H1 (cell line): ENCODE measurements at regions of chr22 and their contacts with region 1.

Region 1: DNA sequence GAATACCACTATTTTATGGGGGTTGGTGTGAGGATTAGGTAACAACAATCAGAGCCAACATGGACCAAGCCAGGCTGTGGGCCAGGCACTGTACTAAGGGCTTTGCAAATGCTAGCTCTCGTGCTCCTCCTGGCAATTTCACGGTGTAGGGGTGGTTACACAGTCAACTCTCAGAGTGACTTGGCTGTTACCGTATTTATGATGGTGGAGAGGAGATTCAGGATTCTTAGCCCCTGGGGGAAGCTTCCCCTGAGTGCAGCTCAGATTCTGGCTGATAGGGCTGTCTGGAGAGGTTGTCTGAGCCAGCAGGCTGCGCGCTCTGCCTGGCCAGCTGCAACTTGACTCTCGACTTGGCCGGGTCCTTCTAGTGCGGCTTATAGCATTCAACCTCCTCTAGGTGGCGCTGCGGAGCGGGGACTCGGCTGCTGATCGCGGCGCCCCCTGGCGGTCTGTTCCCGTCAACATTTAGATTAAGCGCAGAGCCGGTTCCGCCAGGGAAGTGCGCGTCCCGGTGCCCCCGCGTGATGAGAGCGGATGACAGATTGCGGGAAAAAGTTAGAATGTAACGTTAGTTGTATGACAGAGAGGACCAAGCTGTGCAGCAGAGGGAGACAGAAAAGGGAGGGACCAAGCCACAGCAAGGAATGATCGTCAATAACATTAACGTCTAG is 4.5 kb upstream of the NCF4 start:
- DNase-seq: peak; percentile 78 to 99
- H3K4me3 ChIP-seq: no peak overlapping the region
- H3K27ac ChIP-seq: no peak overlapping the region
- H3K4me1 ChIP-seq: peaks cover 0 to 3% (median under 1%) of the 10 kb centered on the region in 4 experiments; a peak in 2 of 7 replicates
- H3K27me3 ChIP-seq: peaks cover 1 to 16% (median 10%) of the 10 kb centered on the region in 4 experiments
- CTCF ChIP-seq: peak; percentile 97 to 100 (median 100)
- EP300 ChIP-seq: no peak
- POLR2A ChIP-seq: no peak
- RAD21 ChIP-seq: peak; percentile 81 to 91

Region 2: GRCh38 chr22:36757668-36758211 is 98.5 kb before region 1 on chr22:
- CTCF ChIA-PET with region 1: interaction called, 30 read pairs
- POLR2A ChIA-PET with region 1: no interaction called
- DNase-seq: peak; percentile 63 to 92
- H3K4me3 ChIP-seq: no peak overlapping the region
- H3K27ac ChIP-seq: no peak overlapping the region
- H3K4me1 ChIP-seq: peaks cover 0 to 7% (median 0%) of the 10 kb centered on the region in 4 experiments; a peak in 2 of 7 replicates
- H3K27me3 ChIP-seq: peaks cover 0 to 3% (median 0%) of the 10 kb centered on the region in 4 experiments; a peak in 2 of 7 replicates
- CTCF ChIP-seq: peak; percentile 90 to 95 (median 95)
- EP300 ChIP-seq: no peak
- POLR2A ChIP-seq: no peak
- RAD21 ChIP-seq: peak; percentile 83 to 91

Region 3: GRCh38 chr22:36781656-36782627 is 74.3 kb before region 1 on chr22:
- CTCF ChIA-PET with region 1: interaction called, 62 read pairs
- POLR2A ChIA-PET with region 1: interaction called, 4 read pairs
- DNase-seq: peak; percentile 73 to 97
- H3K4me3 ChIP-seq: peak overlapping the region in 1 of 4 experiments; percentile 14; a peak in 2 of 8 replicates
- H3K27ac ChIP-seq: no peak overlapping the region
- H3K4me1 ChIP-seq: peaks cover under 1 to 6% (median 3%) of the 10 kb centered on the region in 4 experiments; a peak in 5 of 7 replicates
- H3K27me3 ChIP-seq: peaks cover 0 to 8% (median 7%) of the 10 kb centered on the region in 4 experiments; a peak in 4 of 7 replicates
- CTCF ChIP-seq: peak; percentile 89 to 97 (median 93)
- EP300 ChIP-seq: peak in 1 of 2 experiments; percentile 12; a peak in 1 of 3 replicates
- POLR2A ChIP-seq: no peak
- RAD21 ChIP-seq: peak; percentile 93 to 96

Region 4: GRCh38 chr22:36808761-36809224 is 47.5 kb before region 1 on chr22:
- CTCF ChIA-PET with region 1: interaction called, 10 read pairs
- POLR2A ChIA-PET with region 1: no interaction called
- DNase-seq: no peak
- H3K4me3 ChIP-seq: no peak overlapping the region
- H3K27ac ChIP-seq: no peak overlapping the region
- H3K4me1 ChIP-seq: peaks cover 0 to 5% (median 0%) of the 10 kb centered on the region in 4 experiments; a peak in 2 of 7 replicates
- H3K27me3 ChIP-seq: peaks cover 0 to 2% (median under 1%) of the 10 kb centered on the region in 4 experiments; a peak in 1 of 7 replicates
- CTCF ChIP-seq: no peak
- EP300 ChIP-seq: no peak
- POLR2A ChIP-seq: no peak
- RAD21 ChIP-seq: no peak

Region 5: GRCh38 chr22:36828815-36829214 is 27.4 kb before region 1 on chr22:
- CTCF ChIA-PET with region 1: interaction called, 17 read pairs
- POLR2A ChIA-PET with region 1: no interaction called
- DNase-seq: no peak
- H3K4me3 ChIP-seq: no peak overlapping the region
- H3K27ac ChIP-seq: no peak overlapping the region
- H3K4me1 ChIP-seq: no peaks in the 10 kb centered on the region
- H3K27me3 ChIP-seq: no peaks in the 10 kb centered on the region; a peak in 1 of 7 replicates
- CTCF ChIP-seq: no peak
- EP300 ChIP-seq: no peak
- POLR2A ChIP-seq: no peak
- RAD21 ChIP-seq: no peak

Region 6: GRCh38 chr22:36912694-36913426 is 56.6 kb after region 1 on chr22:
- CTCF ChIA-PET with region 1: no interaction called
- POLR2A ChIA-PET with region 1: no interaction called
- DNase-seq: no peak
- H3K4me3 ChIP-seq: peak overlapping the region in 1 of 4 experiments; percentile 32; a peak in 2 of 8 replicates
- H3K27ac ChIP-seq: no peak overlapping the region
- H3K4me1 ChIP-seq: peaks cover 4 to 13% (median 8%) of the 10 kb centered on the region in 4 experiments
- H3K27me3 ChIP-seq: peaks cover 10 to 48% (median 29%) of the 10 kb centered on the region in 4 experiments
- CTCF ChIP-seq: no peak
- EP300 ChIP-seq: no peak
- POLR2A ChIP-seq: no peak
- RAD21 ChIP-seq: no peak

Region 7: GRCh38 chr22:36977947-36978660 is 121.8 kb after region 1 on chr22:
- CTCF ChIA-PET with region 1: interaction called, 96 read pairs
- POLR2A ChIA-PET with region 1: no interaction called
- DNase-seq: peak; percentile 59 to 88
- H3K4me3 ChIP-seq: peak overlapping the region in 3 of 4 experiments; percentile 29 to 65 (median 33); a peak in 5 of 8 replicates
- H3K27ac ChIP-seq: no peak overlapping the region
- H3K4me1 ChIP-seq: no peaks in the 10 kb centered on the region; a peak in 1 of 7 replicates
- H3K27me3 ChIP-seq: no peaks in the 10 kb centered on the region; a peak in 2 of 7 replicates
- CTCF ChIP-seq: peak; percentile 92 to 93 (median 93)
- EP300 ChIP-seq: no peak; a peak in 1 of 3 replicates
- POLR2A ChIP-seq: no peak
- RAD21 ChIP-seq: peak; percentile 90